Activated CD4-positive, alpha-beta memory T cell treated with anti-CD3 and anti-CD28 coated beads for 36 hours (primary cell): ENCODE measurements at regions of chr16 and their contacts with region 1.

Region 1: GRCh38 chr16:84765616-84766580 is 53.9 kb upstream of the CRISPLD2 start:
- DNase-seq: peak; percentile 65
- H3K4me3 Mint-ChIP-seq: no peak overlapping the region
- H3K27ac Mint-ChIP-seq: peak overlapping the region; percentile 65
- H3K4me1 Mint-ChIP-seq: peaks cover 58% of the 10 kb centered on the region
- H3K27me3 Mint-ChIP-seq: no peaks in the 10 kb centered on the region

Region 2: DNA sequence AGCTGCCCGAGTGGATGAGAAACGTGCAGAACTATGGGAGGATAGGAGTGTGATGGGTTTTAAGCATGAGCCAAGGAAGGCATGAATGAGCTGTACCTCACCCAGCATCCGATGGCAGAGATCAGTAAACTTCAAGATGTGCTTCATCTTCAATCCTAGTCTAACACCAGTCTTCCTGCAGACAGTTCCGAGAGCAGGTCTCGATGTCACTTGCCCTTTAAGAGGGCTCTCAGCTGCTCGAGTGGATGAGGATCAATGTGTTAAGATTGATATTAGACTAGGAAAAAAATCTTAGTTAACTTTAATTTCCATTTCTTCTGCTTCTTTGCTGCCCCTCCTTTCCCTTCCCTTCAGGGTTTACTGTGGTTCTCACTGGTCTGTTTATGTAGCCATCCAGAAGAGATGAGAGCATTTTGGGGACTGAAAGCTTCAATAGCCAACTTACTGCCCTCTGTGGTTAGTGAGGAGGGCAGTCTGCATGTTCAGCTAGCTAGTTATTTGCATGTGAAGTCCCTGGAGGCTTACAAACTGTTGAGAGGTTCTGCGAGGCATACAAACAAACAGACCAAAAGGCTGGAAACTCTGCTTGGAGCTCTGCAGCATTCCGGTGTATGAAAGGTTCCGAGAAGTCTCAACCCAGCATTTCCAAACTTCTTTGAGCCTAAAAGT is 102.3 kb before region 1 on chr16:
- CTCF ChIA-PET with region 1: no interaction called
- POLR2A ChIA-PET with region 1: no interaction called
- intact Hi-C with region 1: no loop called
- DNase-seq: no peak
- H3K4me3 Mint-ChIP-seq: no peak overlapping the region
- H3K27ac Mint-ChIP-seq: no peak overlapping the region
- H3K4me1 Mint-ChIP-seq: peaks cover 1% of the 10 kb centered on the region
- H3K27me3 Mint-ChIP-seq: no peaks in the 10 kb centered on the region

Region 3: DNA sequence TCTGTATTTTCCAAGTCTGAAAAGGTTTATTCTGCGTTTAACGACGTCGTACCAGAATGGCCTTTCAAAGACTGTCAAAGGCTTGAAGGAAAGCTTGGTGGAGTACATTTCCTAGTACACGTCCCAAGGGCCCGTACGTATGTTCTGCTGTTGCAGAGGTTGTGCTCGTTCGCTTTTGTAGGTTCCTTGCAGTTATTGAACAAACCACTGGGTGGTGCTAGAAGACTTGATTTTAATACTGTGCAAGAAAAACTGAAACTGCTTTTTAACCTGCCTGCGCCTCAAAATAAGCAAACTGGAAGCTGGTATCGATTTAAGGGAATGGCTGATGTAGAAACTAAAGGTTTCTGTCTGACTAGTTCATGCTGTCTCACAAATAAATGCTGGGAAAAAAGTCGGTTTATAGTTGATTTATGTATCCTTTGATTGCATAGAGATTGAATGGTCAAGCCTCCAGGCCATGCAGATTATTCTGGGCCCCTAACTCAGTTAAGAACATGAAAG is 11.5 kb before region 1 on chr16:
- CTCF ChIA-PET with region 1: interaction called, 40 read pairs
- POLR2A ChIA-PET with region 1: interaction called, 7 read pairs
- intact Hi-C with region 1: loop called (anchors 2 kb)
- DNase-seq: peak; percentile 65
- H3K4me3 Mint-ChIP-seq: peak overlapping the region; percentile 36
- H3K27ac Mint-ChIP-seq: no peak overlapping the region
- H3K4me1 Mint-ChIP-seq: peaks cover 87% of the 10 kb centered on the region
- H3K27me3 Mint-ChIP-seq: no peaks in the 10 kb centered on the region

Region 4: GRCh38 chr16:84795329-84796053 is 29.6 kb after region 1 on chr16:
- CTCF ChIA-PET with region 1: no interaction called
- POLR2A ChIA-PET with region 1: no interaction called
- intact Hi-C with region 1: no loop called
- DNase-seq: no peak
- H3K4me3 Mint-ChIP-seq: no peak overlapping the region
- H3K27ac Mint-ChIP-seq: no peak overlapping the region
- H3K4me1 Mint-ChIP-seq: no peaks in the 10 kb centered on the region
- H3K27me3 Mint-ChIP-seq: no peaks in the 10 kb centered on the region

Region 5: GRCh38 chr16:84806256-84806889 is 40.5 kb after region 1 on chr16:
- CTCF ChIA-PET with region 1: no interaction called
- POLR2A ChIA-PET with region 1: no interaction called
- intact Hi-C with region 1: loop called (anchors 2 kb)
- DNase-seq: peak; percentile 45
- H3K4me3 Mint-ChIP-seq: no peak overlapping the region
- H3K27ac Mint-ChIP-seq: no peak overlapping the region
- H3K4me1 Mint-ChIP-seq: peaks cover 11% of the 10 kb centered on the region
- H3K27me3 Mint-ChIP-seq: peaks cover 5% of the 10 kb centered on the region